ENCODE measurements at regions of chr12 and their contacts with region 1.

Region 1: DNA sequence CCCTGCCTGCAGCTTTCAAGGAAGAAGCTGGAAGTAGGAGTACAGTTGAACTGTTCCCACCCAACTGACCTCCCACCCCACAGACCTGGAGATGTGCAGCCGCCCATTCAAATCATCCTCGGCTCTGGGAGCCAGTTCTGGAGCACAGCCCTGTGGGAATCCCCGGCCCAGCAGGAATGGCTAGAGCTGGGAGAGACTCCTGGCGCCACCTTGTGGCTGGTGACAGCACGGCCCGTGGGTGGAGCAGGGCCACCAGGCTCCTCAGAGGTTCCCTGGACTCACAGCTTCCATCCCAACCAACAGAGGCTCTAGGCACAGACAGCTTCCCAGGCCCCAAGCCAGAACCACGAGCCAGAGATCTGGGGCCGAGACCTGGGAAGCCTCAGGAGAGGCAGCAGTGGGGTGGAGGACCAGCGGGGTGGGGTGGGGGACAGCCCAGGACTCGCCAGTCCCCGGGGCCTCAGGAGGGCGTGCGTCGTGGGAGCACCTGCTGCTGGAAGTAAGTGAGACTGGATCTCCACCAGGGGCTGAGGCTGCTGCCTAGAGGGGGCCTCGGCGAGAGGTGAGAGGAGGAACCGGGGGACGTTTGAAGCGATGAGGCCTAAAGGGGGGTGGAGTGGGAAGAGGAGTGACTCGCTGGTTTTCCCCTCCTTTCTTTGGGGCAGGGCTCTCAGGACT is 43.4 kb downstream of the RNF34 start:
- DNase-seq: peak; percentile 65
- H3K4me3 ChIP-seq: no peak overlapping the region
- H3K27ac ChIP-seq: no peak overlapping the region
- H3K4me1 ChIP-seq: no peaks in the 10 kb centered on the region
- H3K27me3 ChIP-seq: no peaks in the 10 kb centered on the region
- CTCF ChIP-seq: peak; percentile 91 to 98
- POLR2A ChIP-seq: no peak

Region 2: DNA sequence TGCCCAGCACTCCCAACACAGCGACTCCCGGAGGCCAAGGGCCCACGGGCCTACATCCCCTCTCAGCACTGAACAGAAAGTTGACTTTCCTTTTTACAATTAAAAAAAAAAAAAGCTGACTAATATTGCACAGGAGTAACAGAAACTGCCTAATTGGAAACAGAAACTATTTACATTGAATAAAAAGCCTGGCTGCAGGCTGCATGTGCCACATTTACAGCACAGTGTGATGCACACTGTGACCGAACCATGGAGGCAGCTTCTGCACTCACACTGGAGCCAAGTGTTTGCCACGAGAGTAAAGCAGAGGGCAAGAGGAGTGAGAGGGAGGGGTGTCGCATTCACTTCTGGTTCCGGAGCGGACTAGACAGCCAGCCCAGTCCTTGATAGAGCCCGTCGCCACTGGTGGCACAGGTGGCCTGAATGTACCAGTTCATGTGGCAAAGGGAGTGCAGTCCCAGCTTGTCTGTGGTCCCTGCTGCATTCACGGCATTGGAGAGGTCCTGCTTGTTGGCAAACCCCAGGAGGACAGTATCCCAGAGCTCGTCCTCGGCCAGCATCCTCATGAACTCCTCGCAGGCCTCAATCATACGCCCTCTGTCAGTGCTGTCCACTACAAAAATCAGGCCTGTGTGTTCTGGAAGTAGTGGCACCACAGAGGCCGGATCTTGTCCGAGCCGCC is 598.4 kb before region 1 on chr12:
- CTCF ChIA-PET with region 1: no interaction called
- POLR2A ChIA-PET with region 1: no interaction called
- dilution Hi-C with region 1: no loop called
- intact Hi-C with region 1: no loop called
- DNase-seq: no peak
- H3K4me3 ChIP-seq: no peak overlapping the region
- H3K27ac ChIP-seq: no peak overlapping the region
- H3K4me1 ChIP-seq: peaks cover 7% of the 10 kb centered on the region
- H3K27me3 ChIP-seq: no peaks in the 10 kb centered on the region
- CTCF ChIP-seq: no peak
- POLR2A ChIP-seq: no peak

Region 3: GRCh38 chr12:121334513-121335343 is 108.6 kb before region 1 on chr12:
- CTCF ChIA-PET with region 1: interaction called, 110 read pairs
- POLR2A ChIA-PET with region 1: no interaction called
- dilution Hi-C with region 1: no loop called
- intact Hi-C with region 1: loop called (anchors 1 kb)
- DNase-seq: peak; percentile 65
- H3K4me3 ChIP-seq: no peak overlapping the region
- H3K27ac ChIP-seq: no peak overlapping the region
- H3K4me1 ChIP-seq: no peaks in the 10 kb centered on the region
- H3K27me3 ChIP-seq: no peaks in the 10 kb centered on the region
- CTCF ChIP-seq: peak; percentile 66 to 72
- POLR2A ChIP-seq: no peak

Region 4: GRCh38 chr12:121351820-121352681 is 91.3 kb before region 1 on chr12 and contains the start of gene ANAPC5:
- CTCF ChIA-PET with region 1: interaction called, 11 read pairs
- POLR2A ChIA-PET with region 1: no interaction called
- dilution Hi-C with region 1: no loop called
- intact Hi-C with region 1: loop called (anchors 5 kb)
- DNase-seq: peak; percentile 99
- H3K4me3 ChIP-seq: peak within 1 kb of the TSS; percentile 54 to 85 (median 56)
- H3K27ac ChIP-seq: peak within 1 kb of the TSS; percentile 40
- H3K4me1 ChIP-seq: peaks cover 10% of the 10 kb centered on the region
- H3K27me3 ChIP-seq: no peaks in the 10 kb centered on the region
- CTCF ChIP-seq: peak in 1 of 2 donors; percentile 10
- POLR2A ChIP-seq: peak; percentile 94
- total RNA-seq, gene ANAPC5: 129 and 133 TPM in 2 replicates

Region 5: GRCh38 chr12:121417847-121418246 is 25.5 kb before region 1 on chr12:
- CTCF ChIA-PET with region 1: interaction called, 11 read pairs
- POLR2A ChIA-PET with region 1: no interaction called
- dilution Hi-C with region 1: no loop called
- intact Hi-C with region 1: no loop called
- DNase-seq: no peak
- H3K4me3 ChIP-seq: no peak overlapping the region
- H3K27ac ChIP-seq: no peak overlapping the region
- H3K4me1 ChIP-seq: no peaks in the 10 kb centered on the region
- H3K27me3 ChIP-seq: no peaks in the 10 kb centered on the region
- CTCF ChIP-seq: no peak
- POLR2A ChIP-seq: no peak

Region 6: DNA sequence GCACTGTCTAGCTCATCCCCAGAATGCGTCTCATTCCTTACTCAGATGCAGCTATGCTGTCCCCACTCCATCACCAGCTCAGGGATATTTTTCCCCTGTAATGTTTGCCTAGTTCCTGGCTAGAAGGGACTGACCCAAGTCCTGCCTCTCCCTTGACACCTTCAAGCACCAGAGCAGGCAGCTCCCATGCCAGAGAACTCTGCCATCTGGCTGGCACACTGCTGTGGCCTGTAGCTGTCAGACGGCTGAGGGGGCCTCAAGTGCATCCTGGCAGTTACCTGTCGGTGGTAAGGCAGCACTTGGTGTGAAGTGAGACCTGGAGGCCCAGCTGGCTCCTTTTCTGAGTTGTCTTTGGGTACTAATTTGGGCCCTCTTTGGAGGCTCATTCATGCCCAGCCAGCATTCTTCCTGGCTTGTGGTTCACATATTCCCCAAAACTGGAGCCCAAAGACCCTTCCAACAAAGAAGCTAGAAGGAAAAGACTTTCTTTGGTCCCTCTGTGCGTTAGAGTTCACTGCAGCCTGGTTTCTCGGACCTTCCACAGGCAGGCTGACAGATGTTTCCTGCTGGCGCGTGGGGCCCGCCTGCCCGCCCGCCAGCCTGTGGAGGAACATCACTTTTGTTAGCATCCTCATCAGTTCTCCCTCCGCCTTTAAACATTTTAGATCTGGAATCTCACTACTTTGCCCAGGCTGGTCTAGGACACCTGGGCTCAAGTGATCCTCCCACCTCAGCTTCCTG is 10.4 kb before region 1 on chr12:
- CTCF ChIA-PET with region 1: interaction called, 37 read pairs
- POLR2A ChIA-PET with region 1: no interaction called
- dilution Hi-C with region 1: no loop called
- intact Hi-C with region 1: no loop called
- DNase-seq: no peak
- H3K4me3 ChIP-seq: no peak overlapping the region
- H3K27ac ChIP-seq: no peak overlapping the region
- H3K4me1 ChIP-seq: no peaks in the 10 kb centered on the region
- H3K27me3 ChIP-seq: no peaks in the 10 kb centered on the region
- CTCF ChIP-seq: no peak
- POLR2A ChIP-seq: no peak

Measured in endothelial cell of umbilical vein (primary cell).